ENCODE measurements at regions of chr6 and their contacts with region 1.

Region 1: DNA sequence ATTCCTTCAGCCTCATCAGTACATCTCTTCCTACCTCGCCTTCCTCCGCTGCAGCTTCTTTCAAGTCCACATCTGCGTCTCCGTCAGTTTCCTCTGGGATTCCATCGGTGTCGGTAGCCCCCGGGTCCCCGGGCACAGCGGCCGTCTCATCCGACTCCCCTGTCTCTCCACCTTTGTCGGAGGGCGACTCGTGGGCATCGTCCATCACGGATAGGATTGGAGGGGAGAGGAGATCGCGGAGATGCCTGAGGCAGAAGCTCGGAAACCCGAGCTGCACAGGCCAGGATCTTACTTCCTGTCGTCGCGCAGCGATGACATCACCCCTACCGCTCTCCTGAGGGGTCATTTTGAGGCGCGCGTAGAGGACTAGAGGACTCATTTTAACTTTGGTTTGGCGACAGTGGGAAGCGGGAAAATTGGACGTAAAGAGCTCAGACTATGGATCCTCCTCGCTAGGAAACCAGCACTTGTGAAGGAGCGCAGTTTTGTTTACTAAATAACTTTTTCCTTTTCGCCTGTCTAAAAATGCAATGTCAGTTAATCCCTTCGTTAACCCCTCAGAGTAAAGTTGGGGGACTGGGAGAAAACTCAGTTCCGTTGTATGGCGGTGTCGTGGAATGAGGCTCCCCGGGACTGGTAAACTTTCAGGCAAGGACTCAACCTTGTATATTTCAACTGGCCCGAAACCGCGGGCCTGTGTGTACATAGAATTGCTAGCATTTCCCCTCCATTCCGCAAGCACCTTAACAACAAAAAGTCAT is at the start of gene TAF11:
- H3K4me3 ChIP-seq: peak within 1 kb of the TSS; percentile 73
- H3K27ac ChIP-seq: peak within 1 kb of the TSS; percentile 78
- H3K4me1 ChIP-seq: peaks cover 2% of the 10 kb centered on the region; the same call in 1 of the 2 replicates
- CTCF ChIP-seq: no peak

Region 2: DNA sequence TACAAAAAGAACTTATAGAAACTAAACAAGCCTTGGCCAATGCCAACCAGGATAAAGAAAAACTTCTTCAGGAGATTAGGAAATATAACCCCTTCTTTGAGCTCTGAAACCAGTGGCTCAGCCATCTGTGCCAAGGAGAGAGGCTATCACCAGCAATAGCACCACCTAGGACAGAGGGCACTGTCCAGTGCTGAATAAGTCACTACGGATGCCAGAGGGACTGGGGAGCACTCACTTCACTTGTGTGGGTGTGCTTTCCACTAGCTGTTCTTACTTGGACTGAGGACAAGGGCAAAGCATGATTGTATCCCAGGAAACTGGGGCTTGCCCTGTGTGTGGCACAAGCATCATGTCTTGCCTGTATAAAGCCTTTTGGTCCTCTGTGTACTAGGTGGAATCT is 15.6 kb before region 1 on chr6:
- CTCF ChIA-PET with region 1: interaction called, 3 read pairs
- POLR2A ChIA-PET with region 1: interaction called, 15 read pairs
- H3K4me3 ChIP-seq: no peak overlapping the region
- H3K27ac ChIP-seq: no peak overlapping the region
- H3K4me1 ChIP-seq: no peaks in the 10 kb centered on the region
- CTCF ChIP-seq: no peak

Region 3: DNA sequence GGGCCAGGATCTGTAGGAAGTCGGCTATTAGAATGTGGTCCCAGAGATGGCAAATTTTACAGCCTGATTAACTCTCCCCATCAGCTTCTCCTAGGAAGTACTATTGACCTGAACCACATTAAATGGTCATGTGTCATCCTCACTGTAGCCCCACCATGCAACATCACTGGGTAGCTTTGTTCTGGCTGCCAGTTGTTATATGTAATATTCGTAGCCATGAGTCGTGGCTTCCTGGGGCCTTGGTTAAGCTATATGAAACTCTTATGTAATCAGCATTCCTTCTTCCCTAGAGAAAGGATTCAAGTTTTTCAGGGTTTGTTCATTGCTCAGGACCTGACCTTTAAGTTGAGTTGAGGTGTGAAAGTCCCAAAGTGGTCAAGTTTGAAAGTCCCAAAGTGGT is 126.9 kb after region 1 on chr6:
- CTCF ChIA-PET with region 1: no interaction called
- POLR2A ChIA-PET with region 1: no interaction called
- H3K4me3 ChIP-seq: no peak overlapping the region
- H3K27ac ChIP-seq: no peak overlapping the region
- H3K4me1 ChIP-seq: peaks cover 14% of the 10 kb centered on the region
- CTCF ChIP-seq: no peak

Measured in HEK293 (cell line).